ENCODE measurements at regions of chr22 and their contacts with region 1.

Region 1: GRCh38 chr22:37817705-37818408 is 5.3 kb upstream of the GALR3 start:
- DNase-seq: peak; percentile 64 to 91
- H3K4me3 ChIP-seq: peak overlapping the region; percentile 44; the same call in 1 of the 2 replicates
- H3K27ac ChIP-seq: no peak overlapping the region
- H3K4me1 ChIP-seq: peaks cover 5% of the 10 kb centered on the region
- H3K27me3 ChIP-seq: no peaks in the 10 kb centered on the region
- CTCF ChIP-seq: peak; percentile 97

Region 2: DNA sequence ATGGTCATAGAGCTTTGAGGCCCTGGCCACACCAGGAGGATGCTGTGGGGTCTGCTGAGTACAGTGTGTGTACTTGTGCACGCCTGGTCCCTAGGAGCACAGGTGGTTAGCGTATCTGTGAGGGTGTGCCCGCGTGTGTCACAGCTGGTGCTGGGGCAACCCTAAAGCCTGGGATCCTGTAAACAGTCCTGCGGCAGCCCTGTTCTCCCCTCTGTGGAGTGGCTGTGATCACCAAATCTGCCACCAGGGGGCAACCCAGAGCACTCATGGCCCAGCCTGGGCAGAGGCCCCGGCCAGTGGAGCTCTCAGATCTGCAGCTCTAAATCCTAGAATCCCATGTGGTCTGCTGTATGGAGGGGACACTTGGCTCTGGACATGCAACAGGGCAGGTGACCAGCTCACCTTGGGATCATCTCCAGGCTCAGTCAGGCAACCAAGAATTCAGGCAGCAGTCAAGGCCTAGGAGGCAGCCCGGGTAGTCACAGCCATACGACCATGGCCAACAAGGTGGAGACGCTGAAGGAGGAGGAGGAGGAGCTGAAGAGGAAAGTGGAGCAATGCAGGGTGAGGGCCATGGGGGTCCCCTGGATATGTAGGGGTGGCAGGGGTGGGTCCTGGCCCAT is 174.5 kb before region 1 on chr22:
- CTCF ChIA-PET with region 1: interaction called, 10 read pairs
- POLR2A ChIA-PET with region 1: interaction called, 7 read pairs
- intact Hi-C with region 1: no loop called
- DNase-seq: peak; percentile 65 to 86
- H3K4me3 ChIP-seq: no peak overlapping the region
- H3K27ac ChIP-seq: no peak overlapping the region
- H3K4me1 ChIP-seq: peaks cover 31% of the 10 kb centered on the region
- H3K27me3 ChIP-seq: no peaks in the 10 kb centered on the region
- CTCF ChIP-seq: peak; percentile 99

Region 3: DNA sequence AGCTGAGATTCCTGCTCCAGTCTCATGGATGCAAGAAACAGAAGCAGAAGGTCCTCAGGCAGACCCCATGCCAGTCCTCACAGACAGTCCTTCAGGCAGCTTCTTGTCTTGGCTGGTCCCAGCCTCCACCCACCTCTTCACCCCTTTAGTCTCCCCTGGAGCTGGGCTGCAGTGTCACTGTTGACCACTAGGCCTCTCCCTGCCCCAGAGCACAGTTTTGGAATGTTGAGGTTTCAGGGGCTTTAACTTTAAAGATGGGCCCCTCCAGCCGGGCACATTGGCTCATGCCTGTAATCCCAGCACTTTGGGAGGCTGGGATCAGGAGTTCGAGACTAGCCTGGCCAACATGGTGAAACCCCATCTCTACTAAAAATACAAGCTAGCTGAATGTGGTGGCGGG is 49.6 kb before region 1 on chr22:
- CTCF ChIA-PET with region 1: no interaction called
- POLR2A ChIA-PET with region 1: no interaction called
- intact Hi-C with region 1: no loop called
- DNase-seq: no peak
- H3K4me3 ChIP-seq: no peak overlapping the region
- H3K27ac ChIP-seq: no peak overlapping the region
- H3K4me1 ChIP-seq: no peaks in the 10 kb centered on the region
- H3K27me3 ChIP-seq: no peaks in the 10 kb centered on the region
- CTCF ChIP-seq: peak; percentile 63

Region 4: GRCh38 chr22:37807410-37808293 is 10.2 kb before region 1 on chr22 and contains the start of gene GCAT:
- CTCF ChIA-PET with region 1: interaction called, 21 read pairs
- POLR2A ChIA-PET with region 1: interaction called, 6 read pairs
- intact Hi-C with region 1: no loop called
- DNase-seq: peak; percentile 96
- H3K4me3 ChIP-seq: peak within 1 kb of the TSS; percentile 100
- H3K27ac ChIP-seq: no peak within 1 kb of the TSS
- H3K4me1 ChIP-seq: peaks cover 18% of the 10 kb centered on the region
- H3K27me3 ChIP-seq: no peaks in the 10 kb centered on the region
- CTCF ChIP-seq: no peak
- total RNA-seq, gene GCAT: 32.3 and 37.7 TPM in 2 replicates

Region 5: GRCh38 chr22:37933711-37934376 is 116.0 kb after region 1 on chr22:
- CTCF ChIA-PET with region 1: no interaction called
- POLR2A ChIA-PET with region 1: no interaction called
- intact Hi-C with region 1: loop called (anchors 1 kb)
- DNase-seq: peak; percentile 87 to 95
- H3K4me3 ChIP-seq: no peak overlapping the region
- H3K27ac ChIP-seq: peak overlapping the region; percentile 17; the same call in 1 of the 2 replicates
- H3K4me1 ChIP-seq: peaks cover 17% of the 10 kb centered on the region
- H3K27me3 ChIP-seq: no peaks in the 10 kb centered on the region
- CTCF ChIP-seq: peak; percentile 97

Region 6: GRCh38 chr22:38040953-38041759 is 223.3 kb after region 1 on chr22:
- CTCF ChIA-PET with region 1: no interaction called
- POLR2A ChIA-PET with region 1: no interaction called
- intact Hi-C with region 1: loop called (anchors 5 kb)
- DNase-seq: no peak
- H3K4me3 ChIP-seq: no peak overlapping the region
- H3K27ac ChIP-seq: no peak overlapping the region
- H3K4me1 ChIP-seq: no peaks in the 10 kb centered on the region
- H3K27me3 ChIP-seq: no peaks in the 10 kb centered on the region
- CTCF ChIP-seq: no peak

Measured in PC-9 (cell line).